Psoas muscle (tissue), 8 donors: ENCODE measurements at regions of chr15 and their contacts with region 1.

Region 1: DNA sequence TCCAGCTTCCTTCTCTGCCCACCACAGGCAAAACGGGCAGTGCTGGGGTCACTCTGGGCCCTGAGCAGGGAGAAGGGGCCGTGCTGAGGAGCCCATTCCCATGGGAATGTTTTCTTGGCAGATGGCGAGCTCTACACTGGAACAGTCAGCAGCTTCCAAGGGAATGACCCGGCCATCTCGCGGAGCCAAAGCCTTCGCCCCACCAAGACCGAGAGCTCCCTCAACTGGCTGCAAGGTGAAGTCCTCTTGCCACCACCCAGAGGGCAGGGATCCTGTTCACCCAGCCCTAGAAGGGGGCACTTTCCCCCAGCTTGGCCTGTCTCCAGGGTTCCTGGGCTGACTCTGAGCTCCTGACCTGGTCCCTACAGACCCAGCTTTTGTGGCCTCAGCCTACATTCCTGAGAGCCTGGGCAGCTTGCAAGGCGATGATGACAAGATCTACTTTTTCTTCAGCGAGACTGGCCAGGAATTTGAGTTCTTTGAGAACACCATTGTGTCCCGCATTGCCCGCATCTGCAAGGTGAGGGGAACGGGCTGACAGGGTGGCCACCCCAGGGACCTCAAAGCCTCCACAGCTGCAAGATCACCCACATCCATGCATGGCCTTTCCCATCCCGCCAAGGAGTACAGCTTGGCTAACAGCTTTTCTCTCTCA is 12.4 kb downstream of the CIB1 start:
- DNase-seq: peak; percentile 63 to 89
- ATAC-seq: peak; percentile 86 to 97 (median 91)
- H3K4me3 ChIP-seq: no peak overlapping the region
- H3K27ac ChIP-seq: no peak overlapping the region
- H3K4me1 ChIP-seq: peaks cover 7% of the 10 kb centered on the region
- H3K27me3 ChIP-seq: no peaks in the 10 kb centered on the region
- CTCF ChIP-seq: peak; percentile 81

Region 2: DNA sequence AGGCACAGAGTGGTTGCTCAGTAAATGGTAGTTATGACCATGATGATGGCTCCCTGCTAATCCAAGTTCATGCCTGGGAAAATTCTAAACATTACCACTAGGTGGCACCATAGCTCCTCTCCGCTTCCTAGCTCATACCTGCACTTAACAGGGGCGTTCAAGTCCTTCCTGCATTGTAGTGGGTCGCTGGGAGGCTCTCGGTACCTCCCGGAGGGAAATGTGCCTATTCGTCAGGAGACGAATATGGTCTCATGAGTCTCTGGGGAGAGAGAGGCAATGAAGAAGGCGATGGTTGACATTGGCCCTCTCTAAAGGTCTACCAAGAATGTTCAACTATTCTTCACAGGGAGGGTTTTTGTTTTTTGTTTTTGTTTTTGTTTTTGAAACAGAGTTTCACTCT is 481.2 kb before region 1 on chr15:
- intact Hi-C with region 1: loop called in 1 of 2 experiments (anchors 10 kb)
- DNase-seq: no peak
- ATAC-seq: peak; percentile 82 to 96 (median 90)
- H3K4me3 ChIP-seq: no peak overlapping the region
- H3K27ac ChIP-seq: no peak overlapping the region
- H3K4me1 ChIP-seq: no peaks in the 10 kb centered on the region
- H3K27me3 ChIP-seq: no peaks in the 10 kb centered on the region
- CTCF ChIP-seq: peak; percentile 87

Region 3: GRCh38 chr15:89893696-89894455 is 327.5 kb before region 1 on chr15 and contains the start of gene AP3S2:
- intact Hi-C with region 1: loop called in 1 of 2 experiments (anchors 5 kb)
- DNase-seq: peak; percentile 91 to 95
- ATAC-seq: peak; percentile 96 to 98 (median 98)
- H3K4me3 ChIP-seq: peak within 1 kb of the TSS; percentile 89
- H3K27ac ChIP-seq: peak within 1 kb of the TSS; percentile 88
- H3K4me1 ChIP-seq: peaks cover 14% of the 10 kb centered on the region
- H3K27me3 ChIP-seq: no peaks in the 10 kb centered on the region
- CTCF ChIP-seq: no peak
- total RNA-seq, gene AP3S2: 40.6 to 61.0 (median 46.6) TPM

Region 4: DNA sequence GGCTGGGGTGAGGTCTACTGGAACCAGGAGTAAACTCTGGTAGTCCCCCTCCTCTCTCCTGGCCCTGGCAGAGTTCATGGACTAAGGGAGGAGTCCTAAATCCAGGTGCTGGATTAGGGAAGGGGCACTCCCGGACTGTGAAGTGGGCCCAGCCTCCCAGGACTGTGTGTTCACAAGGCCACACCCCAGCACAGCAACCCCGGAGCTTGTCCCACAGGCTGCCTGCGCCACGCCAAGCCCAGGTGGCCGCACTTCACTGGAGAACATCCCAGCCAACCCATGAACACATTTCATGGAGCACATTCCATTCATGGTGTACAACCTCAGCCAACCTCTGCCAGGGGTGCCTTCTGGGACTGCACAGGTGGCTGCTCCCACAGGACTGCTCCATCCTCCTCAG is 316.9 kb before region 1 on chr15:
- intact Hi-C with region 1: loop called (anchors 5 to 10 kb)
- DNase-seq: no peak
- ATAC-seq: no peak
- H3K4me3 ChIP-seq: no peak overlapping the region
- H3K27ac ChIP-seq: no peak overlapping the region
- H3K4me1 ChIP-seq: no peaks in the 10 kb centered on the region
- H3K27me3 ChIP-seq: no peaks in the 10 kb centered on the region
- CTCF ChIP-seq: no peak

Region 5: GRCh38 chr15:90159213-90159612 is 62.2 kb before region 1 on chr15:
- intact Hi-C with region 1: loop called in 1 of 2 experiments (anchors 1 kb)
- DNase-seq: no peak
- ATAC-seq: no peak
- H3K4me3 ChIP-seq: no peak overlapping the region
- H3K27ac ChIP-seq: no peak overlapping the region
- H3K4me1 ChIP-seq: peaks cover 8% of the 10 kb centered on the region
- H3K27me3 ChIP-seq: no peaks in the 10 kb centered on the region
- CTCF ChIP-seq: no peak

Region 6: DNA sequence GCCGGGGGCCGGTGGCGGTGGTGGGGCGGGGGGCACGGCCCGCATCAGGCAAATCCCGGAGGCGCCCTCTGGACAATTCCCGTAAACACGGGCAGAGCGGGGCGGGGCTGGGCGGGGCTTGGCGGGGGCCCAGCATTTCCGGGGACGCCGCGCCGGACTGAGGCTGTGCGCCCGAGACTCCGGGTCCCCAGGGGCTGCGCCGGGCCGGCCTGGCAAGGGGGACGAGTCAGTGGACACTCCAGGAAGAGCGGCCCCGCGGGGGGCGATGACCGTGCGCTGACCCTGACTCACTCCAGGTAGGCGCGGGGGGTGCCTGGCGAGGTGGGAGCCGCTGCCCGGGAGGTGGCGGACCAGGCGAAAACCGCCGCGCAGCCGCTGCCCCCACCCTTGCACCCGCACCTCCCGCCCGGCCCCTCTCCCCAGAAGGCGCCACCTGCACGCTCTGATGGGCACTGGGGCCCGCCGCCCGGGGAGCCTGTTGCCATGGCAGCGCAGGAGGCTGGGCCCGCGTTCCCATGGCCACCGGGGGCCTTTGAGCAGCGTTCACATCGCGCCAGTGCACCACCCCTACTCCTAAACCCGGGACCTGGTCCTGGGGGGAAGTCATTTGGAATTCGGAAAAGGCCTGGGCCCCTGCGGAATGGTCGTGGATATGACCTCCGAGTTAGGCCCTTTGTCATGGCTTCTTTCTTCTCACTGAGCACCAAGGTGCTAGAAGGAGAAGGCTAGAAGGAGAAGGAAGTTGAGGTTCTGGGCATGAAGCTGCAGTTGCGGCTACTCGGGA is 36.4 kb before region 1 on chr15:
- intact Hi-C with region 1: loop called in 1 of 2 experiments (anchors 5 kb)
- DNase-seq: peak; percentile 72 to 82
- ATAC-seq: peak; percentile 81 to 89 (median 86)
- H3K4me3 ChIP-seq: peak overlapping the region; percentile 77
- H3K27ac ChIP-seq: peak overlapping the region; percentile 71
- H3K4me1 ChIP-seq: peaks cover 2% of the 10 kb centered on the region
- H3K27me3 ChIP-seq: no peaks in the 10 kb centered on the region
- CTCF ChIP-seq: no peak

Region 7: GRCh38 chr15:90203922-90204321 is 17.5 kb before region 1 on chr15:
- intact Hi-C with region 1: loop called in 1 of 2 experiments (anchors 1 kb)
- DNase-seq: no peak
- ATAC-seq: no peak
- H3K4me3 ChIP-seq: no peak overlapping the region
- H3K27ac ChIP-seq: no peak overlapping the region
- H3K4me1 ChIP-seq: peaks cover 10% of the 10 kb centered on the region
- H3K27me3 ChIP-seq: no peaks in the 10 kb centered on the region
- CTCF ChIP-seq: no peak

Region 8: DNA sequence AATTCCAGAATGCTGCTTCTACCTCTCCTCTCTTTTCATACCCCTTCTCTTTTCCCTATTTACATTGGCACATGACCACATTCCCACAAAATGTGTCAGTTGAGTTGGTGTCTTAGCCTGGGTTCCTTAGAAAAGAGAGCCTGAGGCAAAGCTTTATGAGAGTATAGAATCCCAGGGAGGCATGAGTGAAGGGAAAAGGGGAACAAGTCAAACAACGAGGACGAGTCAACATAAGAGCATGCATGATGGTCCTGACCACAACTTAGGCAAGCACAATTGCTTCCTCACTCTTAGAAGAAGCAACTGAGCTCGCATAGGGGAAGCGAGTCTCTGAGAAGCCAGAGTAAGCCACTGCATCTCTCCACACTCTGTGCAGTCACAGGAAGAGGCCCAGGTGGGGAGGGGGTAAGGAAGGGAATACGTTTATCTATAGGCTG is 115.3 kb after region 1 on chr15:
- intact Hi-C with region 1: no loop called
- DNase-seq: no peak
- ATAC-seq: no peak
- H3K4me3 ChIP-seq: no peak overlapping the region
- H3K27ac ChIP-seq: no peak overlapping the region
- H3K4me1 ChIP-seq: no peaks in the 10 kb centered on the region
- H3K27me3 ChIP-seq: no peaks in the 10 kb centered on the region
- CTCF ChIP-seq: no peak